Psoas muscle (tissue), 8 donors: ENCODE measurements at regions of chr10 and their contacts with region 1.

Region 1: DNA sequence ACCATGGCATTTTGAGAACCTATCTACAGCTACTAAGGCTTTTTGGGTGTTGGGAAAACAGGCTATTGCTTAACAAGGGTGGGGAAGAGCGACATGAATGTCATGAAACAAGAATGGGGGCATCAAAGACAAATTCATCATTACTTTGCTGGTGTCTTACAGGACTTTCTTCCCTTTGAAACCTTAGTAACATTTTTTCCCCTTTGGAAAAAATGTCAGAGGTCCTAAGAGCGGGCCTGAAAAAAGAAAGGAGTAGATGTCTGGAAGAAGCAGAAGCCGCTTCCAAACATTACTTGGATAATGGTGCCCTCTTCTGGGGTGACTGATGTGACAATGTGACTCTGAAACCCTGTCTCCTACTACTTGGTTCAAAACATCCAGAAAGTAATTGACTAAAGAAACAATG is 3.8 kb upstream of the DDX50 start:
- DNase-seq: no peak
- ATAC-seq: no peak
- H3K4me3 ChIP-seq: no peak overlapping the region
- H3K27ac ChIP-seq: no peak overlapping the region
- H3K4me1 ChIP-seq: peaks cover 13% of the 10 kb centered on the region
- H3K27me3 ChIP-seq: no peaks in the 10 kb centered on the region
- CTCF ChIP-seq: peak; percentile 68

Region 2: GRCh38 chr10:68550747-68551411 is 346.5 kb before region 1 on chr10:
- intact Hi-C with region 1: loop called (anchors 5 kb)
- DNase-seq: no peak
- ATAC-seq: peak; percentile 76 to 92 (median 80)
- H3K4me3 ChIP-seq: no peak overlapping the region
- H3K27ac ChIP-seq: no peak overlapping the region
- H3K4me1 ChIP-seq: no peaks in the 10 kb centered on the region
- H3K27me3 ChIP-seq: no peaks in the 10 kb centered on the region
- CTCF ChIP-seq: peak; percentile 78

Region 3: GRCh38 chr10:68792115-68792514 is 105.2 kb before region 1 on chr10:
- intact Hi-C with region 1: loop called (anchors 5 kb)
- DNase-seq: no peak
- ATAC-seq: no peak
- H3K4me3 ChIP-seq: no peak overlapping the region
- H3K27ac ChIP-seq: no peak overlapping the region
- H3K4me1 ChIP-seq: no peaks in the 10 kb centered on the region
- H3K27me3 ChIP-seq: no peaks in the 10 kb centered on the region
- CTCF ChIP-seq: peak; percentile 10

Region 4: GRCh38 chr10:68924593-68924992 is 27.3 kb after region 1 on chr10:
- intact Hi-C with region 1: no loop called
- DNase-seq: no peak
- ATAC-seq: no peak
- H3K4me3 ChIP-seq: no peak overlapping the region
- H3K27ac ChIP-seq: no peak overlapping the region
- H3K4me1 ChIP-seq: no peaks in the 10 kb centered on the region
- H3K27me3 ChIP-seq: no peaks in the 10 kb centered on the region
- CTCF ChIP-seq: no peak